ENCODE measurements at regions of chr17 and their contacts with region 1.

Region 1: GRCh38 chr17:80219013-80219762 is 945 bp downstream of the SGSH start:
- DNase-seq: peak; percentile 96
- ATAC-seq: peak; percentile 88
- H3K4me3 Mint-ChIP-seq: peak overlapping the region; percentile 83
- H3K27ac Mint-ChIP-seq: peak overlapping the region; percentile 88
- H3K4me1 Mint-ChIP-seq: peaks cover 19% of the 10 kb centered on the region
- H3K27me3 Mint-ChIP-seq: peaks cover 4% of the 10 kb centered on the region

Region 2: GRCh38 chr17:80265205-80266068 is 46.2 kb after region 1 on chr17:
- CTCF ChIA-PET with region 1: interaction called, 11 read pairs
- DNase-seq: peak; percentile 95
- ATAC-seq: peak; percentile 40
- H3K4me3 Mint-ChIP-seq: no peak overlapping the region
- H3K27ac Mint-ChIP-seq: peak overlapping the region; percentile 91
- H3K4me1 Mint-ChIP-seq: peaks cover 36% of the 10 kb centered on the region
- H3K27me3 Mint-ChIP-seq: no peaks in the 10 kb centered on the region

Region 3: GRCh38 chr17:80374732-80375585 is 155.8 kb after region 1 on chr17:
- CTCF ChIA-PET with region 1: no interaction called
- DNase-seq: no peak
- ATAC-seq: no peak
- H3K4me3 Mint-ChIP-seq: no peak overlapping the region
- H3K27ac Mint-ChIP-seq: peak overlapping the region; percentile 24
- H3K4me1 Mint-ChIP-seq: peaks cover 6% of the 10 kb centered on the region
- H3K27me3 Mint-ChIP-seq: no peaks in the 10 kb centered on the region

Measured in activated CD8-positive, alpha-beta memory T cell treated with anti-CD3 and anti-CD28 coated beads, Interleukin-2, amount 10 ng/mL, durations not matched to agents 7 days and 5 days (primary cell).